Breast epithelium (tissue), 4 donors: ENCODE measurements at regions of chr9 and their contacts with region 1.

Region 1: DNA sequence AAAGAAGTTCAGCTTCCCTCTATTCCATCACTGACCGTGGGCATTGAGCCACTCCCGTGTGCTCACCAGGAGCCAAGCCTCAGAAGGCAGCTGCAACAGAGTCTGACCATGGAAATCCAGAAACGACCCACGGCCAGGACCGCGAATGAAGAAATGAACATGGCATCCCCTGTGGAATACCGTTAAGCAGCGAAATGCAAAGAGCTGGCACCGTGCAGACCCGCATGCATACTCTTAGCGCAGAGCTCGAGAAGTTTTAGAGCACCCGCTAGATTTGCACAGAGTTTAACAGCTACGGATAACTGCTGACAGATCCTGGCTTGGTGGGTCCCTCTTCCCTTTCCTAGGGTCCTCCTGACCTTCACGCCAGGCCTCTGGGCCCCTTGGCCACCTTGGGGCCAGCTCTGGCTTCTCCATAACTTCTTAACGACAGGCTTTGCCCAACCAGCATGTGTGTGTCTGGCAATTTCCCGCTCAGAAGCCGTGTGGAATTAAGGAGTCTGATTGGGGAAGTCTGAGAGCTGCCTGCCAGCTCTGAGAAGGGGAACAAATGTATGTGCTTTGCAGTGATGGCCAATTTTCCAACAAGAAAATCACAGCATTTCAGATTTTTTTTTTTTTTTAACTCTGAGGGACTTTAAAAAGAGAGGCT is 75.3 kb upstream of the COL5A1 start:
- DNase-seq: no peak
- H3K4me3 ChIP-seq: no peak overlapping the region
- H3K27ac ChIP-seq: no peak overlapping the region
- H3K4me1 ChIP-seq: no peaks in the 10 kb centered on the region
- H3K27me3 ChIP-seq: no peaks in the 10 kb centered on the region
- CTCF ChIP-seq: no peak
- POLR2A ChIP-seq: no peak

Region 2: DNA sequence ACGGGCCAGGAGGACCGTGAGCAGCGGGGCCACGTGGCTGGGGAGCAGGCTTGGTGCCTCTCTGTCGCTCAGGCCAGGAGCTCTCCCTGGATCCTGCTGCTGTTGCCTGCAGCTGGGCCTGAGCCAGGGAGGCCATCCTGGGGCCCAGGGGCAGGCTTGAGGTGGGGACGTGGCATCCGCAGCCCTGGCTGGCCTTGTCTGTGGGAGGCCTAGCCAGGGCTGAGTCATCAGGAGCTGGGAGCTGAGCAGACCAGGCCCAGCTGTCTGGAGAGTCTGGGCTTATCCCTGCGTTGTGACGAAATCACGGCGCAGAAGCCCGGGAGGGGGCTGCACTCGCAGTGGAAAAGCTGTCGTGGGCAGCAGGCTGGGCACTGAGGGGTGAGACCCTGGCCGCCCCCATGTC is 63.5 kb before region 1 on chr9:
- intact Hi-C with region 1: loop called (anchors 2 kb)
- DNase-seq: peak in 1 of 2 donors; percentile 50
- H3K4me3 ChIP-seq: no peak overlapping the region
- H3K27ac ChIP-seq: peak overlapping the region in 1 of 2 donors; percentile 43
- H3K4me1 ChIP-seq: peaks cover 0 to 3% of the 10 kb centered on the region in 2 donors
- H3K27me3 ChIP-seq: peaks cover 0 to 27% of the 10 kb centered on the region in 2 donors
- CTCF ChIP-seq: no peak
- POLR2A ChIP-seq: no peak